Lower leg skin (tissue), 4 donors: ENCODE measurements at regions of chr14 and their contacts with region 1.

Region 1: GRCh38 chr14:105375635-105376057 is 22.7 kb upstream of the TEX22 start:
- DNase-seq: no peak
- H3K4me3 ChIP-seq: no peak overlapping the region
- CTCF ChIP-seq: no peak
- POLR2A ChIP-seq: no peak

Region 2: DNA sequence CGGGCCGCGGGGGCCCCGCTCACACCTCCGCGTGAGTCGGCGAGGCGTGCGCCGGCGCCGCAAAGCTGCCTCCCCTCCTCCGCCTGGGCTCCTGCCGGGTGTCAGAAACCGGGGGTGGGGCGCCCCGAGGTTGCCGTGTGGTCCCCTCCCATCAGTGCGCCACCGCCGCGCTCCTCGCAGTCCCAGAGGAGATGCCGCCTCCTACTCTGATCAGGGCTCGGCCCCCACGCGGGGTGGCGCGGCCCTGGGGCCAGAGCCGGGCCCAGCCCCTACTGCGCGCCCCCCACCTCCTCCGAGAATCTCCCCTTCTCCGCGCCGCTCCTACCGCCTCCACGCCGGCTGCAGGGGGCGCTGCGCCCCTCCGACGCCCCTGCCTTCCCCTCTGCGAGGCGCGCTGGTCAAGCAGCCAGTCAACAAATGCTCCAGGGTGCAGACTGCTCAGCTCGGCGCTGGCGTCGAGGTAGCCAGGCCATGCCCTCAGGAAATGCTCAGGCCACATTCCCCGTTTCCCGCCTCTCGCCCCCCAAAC is 206.6 kb before region 1 on chr14:
- intact Hi-C with region 1: no loop called
- DNase-seq: no peak
- H3K4me3 ChIP-seq: no peak overlapping the region
- CTCF ChIP-seq: no peak
- POLR2A ChIP-seq: no peak

Region 3: DNA sequence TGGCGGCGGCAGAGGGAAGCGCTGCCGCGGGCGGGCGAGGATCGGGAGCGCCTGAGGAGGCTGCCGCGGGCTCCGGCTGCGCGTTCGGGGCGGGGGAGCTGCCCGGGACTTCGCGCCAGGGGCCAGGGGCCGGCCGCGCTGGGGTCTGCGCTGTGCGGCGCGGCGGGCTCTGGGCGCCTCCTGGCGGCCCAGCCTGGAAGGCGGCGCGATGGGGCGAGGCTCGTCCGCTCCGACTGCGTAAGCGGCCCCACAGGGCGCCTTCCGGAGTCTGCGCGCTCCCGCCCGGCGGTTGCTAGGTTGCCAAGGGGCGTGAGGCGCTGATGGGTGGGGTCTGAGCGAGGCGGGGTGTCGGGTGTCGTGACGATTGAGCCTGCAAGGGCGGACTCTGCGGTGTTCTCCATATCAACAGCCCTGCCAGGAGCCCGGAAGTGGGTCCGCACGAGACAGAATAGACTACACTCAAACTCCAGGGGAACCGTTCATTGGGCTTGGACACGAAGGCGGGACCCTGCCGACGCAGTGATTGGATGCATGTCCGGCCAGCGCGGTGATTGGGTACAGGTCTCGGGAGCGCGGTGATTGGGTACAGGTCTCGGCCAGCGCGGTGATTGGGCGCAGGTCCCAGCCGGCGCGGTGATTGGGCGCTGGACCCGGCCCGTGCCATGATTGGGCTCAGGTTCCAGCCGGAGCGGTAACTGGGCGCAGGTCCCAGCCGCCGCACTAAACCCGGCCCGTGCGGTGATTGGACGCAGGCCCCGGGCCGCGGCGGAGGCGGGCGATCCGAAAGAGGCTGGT is 115.1 kb after region 1 on chr14 and contains the start of gene TEDC1:
- intact Hi-C with region 1: loop called (anchors 10 kb)
- DNase-seq: peak; percentile 100
- H3K4me3 ChIP-seq: peak within 1 kb of the TSS; percentile 33
- CTCF ChIP-seq: peak in 1 of 3 donors; percentile 39
- POLR2A ChIP-seq: no peak
- total RNA-seq, gene TEDC1: 2.8 to 16.9 (median 5.4) TPM

Region 4: GRCh38 chr14:106044949-106045600 is 669.4 kb after region 1 on chr14:
- intact Hi-C with region 1: no loop called
- DNase-seq: no peak
- H3K4me3 ChIP-seq: no peak overlapping the region
- CTCF ChIP-seq: no peak
- POLR2A ChIP-seq: no peak